Activated CD8-positive, alpha-beta T cell treated with anti-CD3 and anti-CD28 coated beads, Interleukin-2, amount 10 ng/mL, durations not matched to agents 7 days and 5 days (primary cell): ENCODE measurements at regions of chr12 and their contacts with region 1.

Region 1: GRCh38 chr12:98998697-98999299 is 353.7 kb downstream of the APAF1 start:
- DNase-seq: no peak
- ATAC-seq: no peak
- H3K4me3 Mint-ChIP-seq: no peak overlapping the region
- H3K27ac Mint-ChIP-seq: no peak overlapping the region
- H3K4me1 Mint-ChIP-seq: no peaks in the 10 kb centered on the region
- H3K27me3 Mint-ChIP-seq: peaks cover 3% of the 10 kb centered on the region

Region 2: DNA sequence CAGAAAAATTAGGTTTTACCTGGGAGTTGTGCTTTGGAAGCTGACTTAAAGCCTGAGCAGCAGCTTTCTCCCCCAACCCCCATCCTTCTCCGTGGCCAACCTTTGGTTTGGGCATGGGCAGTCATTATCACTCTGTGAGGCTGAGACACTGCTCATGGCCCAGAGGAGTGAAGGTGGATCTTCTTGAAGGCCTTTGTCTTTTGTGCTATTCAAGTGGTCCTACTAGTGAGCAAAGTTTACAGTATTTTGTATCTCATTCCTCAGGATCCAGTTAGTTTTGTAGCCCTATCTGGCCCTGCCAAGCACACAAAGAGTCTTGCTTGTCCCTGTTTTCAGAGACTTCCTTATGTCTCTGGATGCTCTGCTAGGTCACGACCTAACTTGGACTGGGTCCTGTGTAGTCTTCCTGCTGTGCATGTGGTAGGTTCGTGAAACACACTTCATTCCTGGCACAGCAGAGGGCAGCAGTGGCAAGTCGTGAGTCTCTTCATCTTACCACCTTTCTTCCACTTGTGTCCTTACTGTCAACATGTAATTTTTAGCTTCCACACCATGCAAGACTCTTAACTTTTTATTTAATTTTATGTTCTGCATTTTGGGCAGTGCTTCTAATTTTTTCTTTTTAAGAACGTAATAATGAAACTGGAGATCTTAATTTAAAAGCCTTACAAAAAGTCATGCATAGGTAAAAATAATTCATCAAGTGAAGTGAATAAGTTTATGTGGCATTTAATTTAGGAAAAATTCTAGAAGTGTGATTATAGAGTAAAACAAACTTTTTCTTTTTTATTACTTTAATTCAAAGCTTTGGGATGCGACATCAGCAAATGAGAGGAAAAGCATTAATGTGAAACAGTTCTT is 300.0 kb before region 1 on chr12:
- CTCF ChIA-PET with region 1: interaction called, 13 read pairs
- POLR2A ChIA-PET with region 1: no interaction called
- DNase-seq: peak; percentile 66
- ATAC-seq: peak; percentile 82
- H3K4me3 Mint-ChIP-seq: no peak overlapping the region
- H3K27ac Mint-ChIP-seq: peak overlapping the region; percentile 34
- H3K4me1 Mint-ChIP-seq: peaks cover 1% of the 10 kb centered on the region
- H3K27me3 Mint-ChIP-seq: no peaks in the 10 kb centered on the region

Region 3: GRCh38 chr12:98968896-98969295 is 29.9 kb before region 1 on chr12:
- CTCF ChIA-PET with region 1: no interaction called
- POLR2A ChIA-PET with region 1: no interaction called
- DNase-seq: no peak
- ATAC-seq: no peak
- H3K4me3 Mint-ChIP-seq: no peak overlapping the region
- H3K27ac Mint-ChIP-seq: no peak overlapping the region
- H3K4me1 Mint-ChIP-seq: no peaks in the 10 kb centered on the region
- H3K27me3 Mint-ChIP-seq: no peaks in the 10 kb centered on the region

Region 4: DNA sequence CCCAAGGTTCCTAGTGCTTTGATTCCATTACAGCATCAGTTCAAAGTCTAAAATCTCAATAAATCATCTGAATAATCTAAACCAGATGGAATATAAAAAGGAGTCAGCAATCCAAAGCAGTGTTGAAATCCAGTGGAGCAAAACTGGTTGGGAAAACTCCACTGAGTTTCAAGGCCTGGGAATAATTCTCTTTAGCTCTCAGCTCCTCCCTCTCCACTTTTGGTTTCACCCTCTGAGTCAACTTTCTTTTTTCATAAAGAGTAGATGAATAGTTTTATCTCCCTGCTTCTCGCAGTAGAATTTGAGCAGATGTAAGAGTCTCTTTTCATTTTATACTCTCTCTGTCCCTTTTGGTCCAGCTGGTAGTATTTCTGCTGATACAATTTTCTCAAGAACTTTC is 15.2 kb before region 1 on chr12:
- CTCF ChIA-PET with region 1: no interaction called
- POLR2A ChIA-PET with region 1: no interaction called
- DNase-seq: no peak
- ATAC-seq: no peak
- H3K4me3 Mint-ChIP-seq: no peak overlapping the region
- H3K27ac Mint-ChIP-seq: no peak overlapping the region
- H3K4me1 Mint-ChIP-seq: no peaks in the 10 kb centered on the region
- H3K27me3 Mint-ChIP-seq: no peaks in the 10 kb centered on the region